ENCODE measurements at regions of chr9 and their contacts with region 1.

Region 1: DNA sequence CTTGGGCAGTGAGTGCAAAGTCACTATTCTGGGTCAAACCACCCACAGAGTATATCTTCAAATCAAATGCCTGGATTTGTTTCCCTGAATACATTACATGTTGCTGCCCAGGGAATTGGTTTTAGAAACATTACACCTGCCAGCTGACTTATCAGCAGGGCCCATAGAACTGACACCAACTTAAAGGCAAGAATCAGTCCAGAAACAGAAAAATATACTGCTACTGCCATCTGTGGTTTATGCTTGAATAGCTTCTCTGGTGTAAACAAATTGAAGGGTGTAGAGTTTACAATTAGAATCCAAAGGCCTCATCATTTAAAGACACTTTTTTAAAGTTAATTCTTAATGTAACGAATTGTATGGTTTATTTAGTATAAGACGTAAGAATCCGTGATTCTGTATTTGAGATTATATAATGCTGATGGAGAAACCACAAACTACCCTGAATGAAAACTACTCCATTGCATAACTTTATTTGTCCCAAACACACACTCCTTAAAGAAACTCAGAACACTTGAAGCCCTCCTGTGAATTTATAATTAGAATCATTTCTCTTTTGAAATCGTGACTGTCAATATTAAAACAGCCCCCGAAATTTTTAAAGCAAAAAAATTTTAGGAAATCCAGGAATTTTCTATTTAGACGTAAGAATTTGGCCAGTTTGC is 6.2 kb downstream of the NR6A1 start:
- DNase-seq: no peak
- H3K4me3 ChIP-seq: no peak overlapping the region
- H3K27me3 ChIP-seq: peaks cover 23% of the 10 kb centered on the region
- CTCF ChIP-seq: peak; percentile 42

Region 2: GRCh38 chr9:124754289-124754688 is 10.6 kb before region 1 on chr9:
- CTCF ChIA-PET with region 1: interaction called, 14 read pairs
- POLR2A ChIA-PET with region 1: no interaction called
- DNase-seq: no peak
- H3K4me3 ChIP-seq: no peak overlapping the region
- H3K27me3 ChIP-seq: peaks cover 2% of the 10 kb centered on the region
- CTCF ChIP-seq: peak; percentile 72

Region 3: DNA sequence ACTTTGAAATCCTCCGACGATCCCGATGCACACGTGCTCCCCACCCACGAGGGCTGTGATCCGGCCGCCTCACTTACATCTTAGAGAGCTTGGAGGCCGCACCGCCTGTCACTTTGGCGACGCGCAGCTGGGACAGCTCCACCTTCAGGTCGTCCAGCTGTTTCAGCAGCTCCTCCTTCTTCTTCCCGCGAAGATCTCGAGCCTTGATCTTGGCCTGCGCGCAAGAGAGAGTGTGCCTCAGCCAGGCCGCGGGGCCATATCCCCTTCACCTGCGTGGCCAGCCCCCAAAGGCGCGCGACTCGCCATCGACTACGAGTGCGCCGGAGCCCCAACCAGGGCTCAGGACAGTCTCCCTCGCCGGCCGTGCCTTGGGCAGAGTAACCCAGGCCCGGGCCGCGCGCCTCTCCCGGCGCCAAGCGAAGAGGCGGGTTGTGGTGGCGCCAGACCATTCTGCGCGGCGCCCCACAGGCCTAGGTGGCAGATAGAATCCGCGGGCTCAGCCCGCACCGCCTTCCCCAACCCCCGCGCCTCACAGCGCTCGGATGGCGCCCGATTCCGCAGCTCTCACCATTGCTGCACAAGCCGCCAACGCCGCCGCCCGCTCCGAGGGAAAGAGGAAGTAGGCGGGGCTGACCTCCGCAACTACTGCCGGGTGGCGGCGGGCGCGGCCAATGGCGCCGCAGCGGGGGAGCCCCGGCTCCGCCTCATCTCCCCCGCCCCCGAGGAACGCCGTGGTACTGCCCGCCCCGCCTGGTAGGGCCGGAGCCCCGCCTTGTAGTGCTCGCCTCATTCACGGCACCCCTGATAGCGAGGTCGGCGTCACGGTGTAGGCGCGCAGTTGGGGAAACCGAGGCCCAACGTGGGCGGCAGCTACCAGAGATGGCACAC is 96.7 kb after region 1 on chr9 and contains the starts of genes ARPC5L and RPL35:
- CTCF ChIA-PET with region 1: interaction called, 1,161 read pairs
- POLR2A ChIA-PET with region 1: interaction called, 14 read pairs
- DNase-seq: peak; percentile 53
- H3K4me3 ChIP-seq: peak within 1 kb of the TSS; percentile 96
- H3K27me3 ChIP-seq: no peaks in the 10 kb centered on the region
- CTCF ChIP-seq: peak; percentile 40
- polyA plus RNA-seq, gene ARPC5L: 34.0 and 41.0 TPM in 2 replicates
- polyA plus RNA-seq, gene RPL35: 3,181 and 3,838 TPM in 2 replicates

Measured in BJ (cell line).